ENCODE measurements at regions of chr3 and their contacts with region 1.

Region 1: GRCh38 chr3:108090701-108091451 is at the start of gene CD47:
- DNase-seq: peak; percentile 94 to 98 (median 98)
- ATAC-seq: peak; percentile 85
- H3K4me3 ChIP-seq: peak within 1 kb of the TSS; percentile 92
- H3K4me3 Mint-ChIP-seq: peak within 1 kb of the TSS in 8 of 10 donors; percentile 85 to 100 (median 98)
- H3K27ac ChIP-seq: peak within 1 kb of the TSS; percentile 100
- H3K27ac Mint-ChIP-seq: peak within 1 kb of the TSS; percentile 94 to 100 (median 99)
- H3K4me1 ChIP-seq: peaks cover 43 to 50% of the 10 kb centered on the region in 2 donors
- H3K4me1 Mint-ChIP-seq: peaks cover 33 to 56% (median 41%) of the 10 kb centered on the region in 7 donors
- H3K27me3 ChIP-seq: no peaks in the 10 kb centered on the region
- H3K27me3 Mint-ChIP-seq: peaks cover 0 to 10% (median 0%) of the 10 kb centered on the region in 5 donors
- total RNA-seq, gene CD47: 130 to 232 (median 136) TPM

Region 2: GRCh38 chr3:108036984-108037741 is 53.7 kb before region 1 on chr3:
- CTCF ChIA-PET with region 1: no interaction called
- POLR2A ChIA-PET with region 1: no interaction called
- intact Hi-C with region 1: loop called in 1 of 2 experiments (anchors 2 kb)
- DNase-seq: no peak
- ATAC-seq: peak; percentile 46
- H3K4me3 ChIP-seq: no peak overlapping the region
- H3K4me3 Mint-ChIP-seq: no peak overlapping the region
- H3K27ac ChIP-seq: no peak overlapping the region
- H3K27ac Mint-ChIP-seq: peak overlapping the region in 5 of 9 donors; percentile 5 to 85 (median 22)
- H3K4me1 ChIP-seq: no peaks in the 10 kb centered on the region
- H3K4me1 Mint-ChIP-seq: peaks cover 10 to 34% (median 23%) of the 10 kb centered on the region in 7 donors
- H3K27me3 ChIP-seq: no peaks in the 10 kb centered on the region
- H3K27me3 Mint-ChIP-seq: no peaks in the 10 kb centered on the region

Region 3: DNA sequence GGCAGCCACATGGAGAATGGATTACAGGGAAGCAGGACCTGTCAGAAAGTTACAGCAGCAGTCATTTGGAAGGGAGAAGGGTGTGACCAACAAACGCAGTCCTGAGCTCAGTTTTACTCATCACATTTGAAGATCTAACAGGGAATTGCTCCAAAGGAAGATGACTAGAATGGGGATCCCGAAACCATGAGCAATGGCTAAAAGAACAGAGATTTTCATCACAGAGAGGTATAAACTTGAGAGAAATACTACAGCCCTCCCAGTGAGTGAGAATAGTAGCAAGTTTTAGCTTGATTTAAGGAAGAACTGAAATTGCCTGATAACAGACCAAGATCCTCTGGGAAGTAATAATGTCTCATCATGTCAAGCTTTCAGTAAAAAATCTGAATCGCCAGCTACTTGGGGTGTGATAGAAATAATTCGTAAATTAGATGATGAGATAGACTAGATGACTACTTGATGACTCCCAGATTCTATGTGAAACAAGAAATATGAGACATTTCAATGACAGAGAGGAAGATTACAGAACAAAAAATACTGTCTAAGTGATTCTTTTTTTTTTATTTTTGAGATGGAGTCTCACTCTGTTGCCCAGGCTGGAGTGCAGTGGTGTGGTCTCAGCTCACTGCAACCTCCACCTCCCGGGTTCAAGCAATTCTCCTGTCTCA is 17.0 kb before region 1 on chr3:
- CTCF ChIA-PET with region 1: interaction called, 3 read pairs
- POLR2A ChIA-PET with region 1: interaction called, 11 read pairs
- intact Hi-C with region 1: loop called in 1 of 2 experiments (anchors 1 kb)
- DNase-seq: no peak
- ATAC-seq: no peak
- H3K4me3 ChIP-seq: no peak overlapping the region
- H3K4me3 Mint-ChIP-seq: peak overlapping the region in 4 of 10 donors; percentile 7 to 68 (median 42)
- H3K27ac ChIP-seq: no peak overlapping the region
- H3K27ac Mint-ChIP-seq: peak overlapping the region in 7 of 9 donors; percentile 29 to 74 (median 56)
- H3K4me1 ChIP-seq: peaks cover 24 to 41% of the 10 kb centered on the region in 2 donors
- H3K4me1 Mint-ChIP-seq: peaks cover 42 to 94% (median 68%) of the 10 kb centered on the region in 7 donors
- H3K27me3 ChIP-seq: no peaks in the 10 kb centered on the region
- H3K27me3 Mint-ChIP-seq: no peaks in the 10 kb centered on the region

Region 4: DNA sequence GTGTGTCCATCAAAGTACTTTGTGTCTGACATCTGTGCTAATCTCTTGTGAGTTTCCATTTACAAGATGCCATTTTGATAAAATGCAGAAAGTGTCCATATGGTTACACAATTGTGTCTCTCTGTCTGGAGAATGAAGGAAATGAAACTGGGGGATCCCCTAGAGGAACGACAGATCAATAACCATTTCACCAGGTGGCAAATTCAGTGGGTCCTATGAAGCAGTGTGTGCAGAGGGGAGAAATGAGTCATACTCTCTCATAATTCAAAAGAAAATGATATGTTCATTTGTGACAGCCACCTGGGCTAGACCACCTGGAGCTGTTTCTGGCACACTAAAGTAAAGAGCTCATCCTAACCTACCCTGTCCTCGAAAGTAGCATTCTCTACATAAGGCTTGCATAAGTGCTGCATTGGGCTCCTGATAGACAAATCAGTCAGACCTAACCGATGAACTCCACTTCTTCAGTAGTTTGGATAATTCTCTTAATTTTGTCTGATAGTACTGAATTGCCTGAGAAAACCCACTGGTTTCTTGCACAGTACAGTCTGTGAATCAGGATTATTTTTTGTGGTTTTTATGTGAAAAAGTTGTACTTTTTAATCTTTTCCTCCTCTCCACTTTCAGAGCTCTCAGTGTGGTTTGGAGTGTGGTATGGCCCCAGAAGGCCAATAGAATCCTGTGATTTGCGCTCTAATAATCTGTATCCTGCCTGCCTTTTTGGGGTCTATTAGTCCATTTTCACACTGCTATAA is 10.2 kb after region 1 on chr3:
- CTCF ChIA-PET with region 1: interaction called, 11 read pairs
- POLR2A ChIA-PET with region 1: interaction called, 20 read pairs
- intact Hi-C with region 1: loop called (anchors 1 kb)
- DNase-seq: peak in 2 of 9 donors; percentile 27 to 74
- ATAC-seq: peak; percentile 72
- H3K4me3 ChIP-seq: no peak overlapping the region
- H3K4me3 Mint-ChIP-seq: peak overlapping the region in 9 of 10 donors; percentile 15 to 79 (median 49)
- H3K27ac ChIP-seq: peak overlapping the region; percentile 49
- H3K27ac Mint-ChIP-seq: peak overlapping the region; percentile 21 to 85 (median 80)
- H3K4me1 ChIP-seq: peaks cover 16 to 33% of the 10 kb centered on the region in 2 donors
- H3K4me1 Mint-ChIP-seq: peaks cover 28 to 77% (median 64%) of the 10 kb centered on the region in 7 donors
- H3K27me3 ChIP-seq: no peaks in the 10 kb centered on the region
- H3K27me3 Mint-ChIP-seq: peaks cover 0 to 22% (median 0%) of the 10 kb centered on the region in 5 donors

Region 5: DNA sequence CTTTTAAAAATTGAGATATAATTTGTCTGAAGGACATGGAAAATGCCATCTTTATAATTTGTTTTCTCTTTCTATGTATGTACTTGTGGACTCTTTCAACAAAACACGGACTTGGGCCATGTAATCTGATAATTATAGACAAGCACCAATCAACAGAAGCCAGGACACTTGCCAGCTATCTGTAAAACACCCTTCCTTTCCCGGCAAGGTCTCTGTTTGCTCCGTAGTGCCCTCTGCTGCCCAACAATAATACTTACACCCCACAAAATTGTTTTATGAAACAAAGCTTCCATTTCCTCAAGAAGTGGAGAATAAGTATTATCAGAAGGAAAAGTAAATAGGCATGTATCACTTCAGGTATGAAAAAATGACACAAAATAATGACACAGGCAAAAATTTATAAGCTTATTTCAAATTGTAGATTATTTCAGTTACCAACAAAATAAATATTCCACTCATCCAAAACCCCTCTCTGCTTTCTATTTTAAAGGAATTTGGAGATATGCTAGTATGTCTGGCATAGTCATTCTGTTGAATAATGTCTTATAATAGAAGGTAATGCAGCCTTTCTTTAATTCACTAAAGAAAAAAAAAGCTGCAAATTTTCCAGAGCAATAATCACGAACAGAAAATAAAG is 386.8 kb after region 1 on chr3:
- CTCF ChIA-PET with region 1: interaction called, 3 read pairs
- POLR2A ChIA-PET with region 1: no interaction called
- intact Hi-C with region 1: loop called in 1 of 2 experiments (anchors 10 kb)
- DNase-seq: peak; percentile 17 to 65 (median 51)
- ATAC-seq: peak; percentile 91
- H3K4me3 ChIP-seq: no peak overlapping the region
- H3K4me3 Mint-ChIP-seq: no peak overlapping the region
- H3K27ac ChIP-seq: no peak overlapping the region
- H3K27ac Mint-ChIP-seq: no peak overlapping the region
- H3K4me1 ChIP-seq: no peaks in the 10 kb centered on the region
- H3K4me1 Mint-ChIP-seq: peaks cover 0 to 7% (median 0%) of the 10 kb centered on the region in 7 donors
- H3K27me3 ChIP-seq: no peaks in the 10 kb centered on the region
- H3K27me3 Mint-ChIP-seq: peaks cover 0 to 17% (median 3%) of the 10 kb centered on the region in 5 donors

Region 6: GRCh38 chr3:108835101-108835500 is 744.2 kb after region 1 on chr3:
- CTCF ChIA-PET with region 1: no interaction called
- POLR2A ChIA-PET with region 1: no interaction called
- intact Hi-C with region 1: loop called in 1 of 2 experiments (anchors 5 kb)
- DNase-seq: peak in 7 of 9 donors; percentile 60 to 85 (median 75)
- ATAC-seq: peak; percentile 94
- H3K4me3 ChIP-seq: peak overlapping the region; percentile 43
- H3K4me3 Mint-ChIP-seq: peak overlapping the region; percentile 85 to 100 (median 92)
- H3K27ac ChIP-seq: peak overlapping the region; percentile 78
- H3K27ac Mint-ChIP-seq: peak overlapping the region; percentile 83 to 100 (median 94)
- H3K4me1 ChIP-seq: peaks cover 69% of the 10 kb centered on the region in 2 donors
- H3K4me1 Mint-ChIP-seq: peaks cover 42 to 96% (median 88%) of the 10 kb centered on the region in 7 donors
- H3K27me3 ChIP-seq: no peaks in the 10 kb centered on the region
- H3K27me3 Mint-ChIP-seq: no peaks in the 10 kb centered on the region